ENCODE measurements at regions of chr10 and their contacts with region 1.

Region 1: GRCh38 chr10:70880077-70880534 is 8.3 kb downstream of the PCBD1 start:
- DNase-seq: peak; percentile 73 to 88 (median 82)
- ATAC-seq: peak; percentile 82 to 85
- H3K4me3 ChIP-seq: no peak overlapping the region
- H3K27ac ChIP-seq: no peak overlapping the region
- H3K4me1 ChIP-seq: no peaks in the 10 kb centered on the region
- H3K27me3 ChIP-seq: no peaks in the 10 kb centered on the region

Region 2: GRCh38 chr10:70815504-70816219 is 64.4 kb before region 1 on chr10 and contains the start of gene SGPL1:
- intact Hi-C with region 1: loop called (anchors 2 to 5 kb)
- DNase-seq: peak; percentile 87 to 96 (median 94)
- ATAC-seq: peak; percentile 96 to 97
- H3K4me3 ChIP-seq: peak within 1 kb of the TSS; percentile 94
- H3K27ac ChIP-seq: peak within 1 kb of the TSS; percentile 76
- H3K4me1 ChIP-seq: no peaks in the 10 kb centered on the region
- H3K27me3 ChIP-seq: no peaks in the 10 kb centered on the region
- total RNA-seq, gene SGPL1: 12.2 to 20.2 (median 14.6) TPM

Region 3: DNA sequence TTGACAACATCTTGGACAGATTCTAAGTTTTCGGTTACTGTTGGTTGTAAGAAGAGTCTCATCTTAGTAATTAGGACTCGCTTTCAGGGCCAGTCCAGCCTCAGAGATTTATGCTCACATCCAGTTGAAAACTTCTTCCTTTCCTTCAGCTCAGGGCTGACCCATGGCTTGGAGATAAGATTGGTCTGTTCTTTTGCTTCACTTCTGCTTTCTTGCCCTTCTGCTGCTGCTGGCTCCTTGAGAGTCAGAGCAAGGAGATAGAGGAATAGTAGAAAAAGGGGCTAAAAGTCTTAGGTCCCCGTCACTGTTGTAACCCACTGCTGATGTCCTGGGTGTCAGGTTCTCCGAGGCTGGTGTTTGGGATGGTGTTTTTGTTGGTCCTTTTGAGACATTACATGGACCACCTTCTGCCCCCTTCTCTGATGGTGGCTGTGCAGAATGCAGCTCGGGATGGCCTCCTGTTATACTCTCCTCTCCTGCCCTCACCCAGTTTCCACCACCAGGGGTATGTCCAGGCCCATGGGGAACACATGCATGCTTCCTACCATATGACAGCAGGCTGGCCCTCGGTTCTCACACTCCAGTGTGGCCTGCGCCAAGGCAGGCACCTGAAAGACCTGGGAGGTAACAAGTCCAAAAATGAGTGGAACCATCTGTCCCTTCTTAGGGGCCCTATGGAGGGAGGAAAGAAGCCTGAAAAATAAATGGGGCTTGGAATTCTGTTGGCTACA is 76.1 kb after region 1 on chr10:
- intact Hi-C with region 1: no loop called
- DNase-seq: no peak
- ATAC-seq: no peak
- H3K4me3 ChIP-seq: no peak overlapping the region
- H3K27ac ChIP-seq: no peak overlapping the region
- H3K4me1 ChIP-seq: no peaks in the 10 kb centered on the region
- H3K27me3 ChIP-seq: no peaks in the 10 kb centered on the region

Measured in right cardiac atrium (tissue), 5 donors.